ENCODE measurements at regions of chr12 and their contacts with region 1.

Region 1: DNA sequence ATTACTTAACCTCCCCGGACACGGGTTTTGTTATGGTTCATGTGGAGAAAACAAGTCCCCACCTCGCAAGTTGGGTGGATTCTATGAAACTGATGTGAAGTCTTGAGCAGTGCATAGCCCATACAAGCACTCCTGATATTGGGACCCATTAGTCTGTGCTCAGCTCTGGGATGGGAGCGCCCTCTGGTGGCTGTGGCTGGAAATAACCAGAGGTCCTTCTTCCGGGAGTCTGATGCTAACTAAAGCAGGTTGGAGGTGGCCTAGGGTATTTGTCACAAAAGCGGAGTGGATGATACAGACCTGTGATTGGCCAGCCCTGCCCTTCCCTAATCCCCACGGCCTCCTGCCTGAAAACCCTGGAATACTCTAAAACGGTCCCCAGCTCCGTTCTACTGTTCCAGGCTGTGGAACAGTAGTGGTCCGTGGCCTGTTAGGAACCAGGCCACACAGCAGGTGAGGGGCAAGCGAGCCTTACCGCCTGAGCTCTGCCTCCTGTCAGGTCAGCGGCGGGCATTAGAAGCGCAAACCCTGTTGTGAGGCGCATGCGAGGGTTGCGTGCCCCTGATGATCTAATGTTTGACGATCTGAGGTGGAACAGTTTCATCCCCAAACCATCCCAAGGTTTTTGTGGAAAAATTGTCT is 6.4 kb downstream of the SLC48A1 start:
- DNase-seq: peak; percentile 63 to 96
- H3K4me3 ChIP-seq: no peak overlapping the region
- H3K27ac ChIP-seq: peak overlapping the region; percentile 53 to 88
- H3K4me1 ChIP-seq: peaks cover 37 to 51% of the 10 kb centered on the region in 2 donors
- H3K27me3 ChIP-seq: no peaks in the 10 kb centered on the region
- CTCF ChIP-seq: peak; percentile 87 to 95 (median 92)

Region 2: DNA sequence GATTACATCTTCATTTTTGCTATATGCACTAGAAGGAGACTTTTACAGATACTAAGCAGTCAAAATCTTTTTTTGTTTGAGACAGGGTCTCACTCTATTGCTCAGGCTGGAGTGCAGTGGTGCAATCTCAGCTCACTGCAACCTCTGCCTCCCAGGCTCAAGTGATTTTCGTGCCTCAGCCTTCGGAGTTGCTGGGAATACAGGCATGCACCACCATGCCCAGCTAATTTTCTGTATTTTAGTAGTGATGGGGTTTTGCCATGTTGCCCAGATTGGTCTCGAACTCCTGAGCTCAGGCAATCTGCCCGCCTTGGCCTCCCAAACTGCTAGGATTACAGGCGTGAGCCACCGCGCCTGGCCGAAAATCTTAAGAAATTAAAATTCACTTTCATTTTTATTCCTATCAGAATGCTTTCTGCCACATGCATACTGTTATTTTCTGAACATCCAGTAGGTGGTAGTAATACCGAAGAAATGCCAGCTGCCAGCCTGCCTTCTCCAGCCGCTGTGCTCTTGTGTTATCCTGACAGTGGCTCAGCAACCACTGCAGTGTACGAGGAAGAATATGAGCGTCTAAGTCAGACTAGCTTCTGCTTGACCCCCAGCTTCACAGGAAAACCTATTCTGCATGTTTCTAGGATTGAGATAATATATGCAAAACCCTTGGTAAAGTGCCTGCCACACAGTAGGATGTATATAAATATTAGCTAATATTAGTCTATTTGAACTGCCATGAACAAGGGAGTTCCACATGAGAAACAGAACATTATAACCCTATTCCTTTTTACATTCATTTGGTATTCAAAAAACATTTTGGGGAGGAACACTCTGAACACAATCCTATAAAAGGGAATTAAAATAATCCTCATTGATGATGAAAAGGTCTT is 127.8 kb before region 1 on chr12:
- intact Hi-C with region 1: loop called (anchors 2 kb)
- DNase-seq: peak in 1 of 2 donors; percentile 72
- H3K4me3 ChIP-seq: peak overlapping the region in 1 of 2 donors; percentile 48
- H3K27ac ChIP-seq: peak overlapping the region; percentile 6 to 29
- H3K4me1 ChIP-seq: peaks cover 0 to 2% of the 10 kb centered on the region in 2 donors
- H3K27me3 ChIP-seq: no peaks in the 10 kb centered on the region
- CTCF ChIP-seq: peak; percentile 66 to 86 (median 74)

Region 3: DNA sequence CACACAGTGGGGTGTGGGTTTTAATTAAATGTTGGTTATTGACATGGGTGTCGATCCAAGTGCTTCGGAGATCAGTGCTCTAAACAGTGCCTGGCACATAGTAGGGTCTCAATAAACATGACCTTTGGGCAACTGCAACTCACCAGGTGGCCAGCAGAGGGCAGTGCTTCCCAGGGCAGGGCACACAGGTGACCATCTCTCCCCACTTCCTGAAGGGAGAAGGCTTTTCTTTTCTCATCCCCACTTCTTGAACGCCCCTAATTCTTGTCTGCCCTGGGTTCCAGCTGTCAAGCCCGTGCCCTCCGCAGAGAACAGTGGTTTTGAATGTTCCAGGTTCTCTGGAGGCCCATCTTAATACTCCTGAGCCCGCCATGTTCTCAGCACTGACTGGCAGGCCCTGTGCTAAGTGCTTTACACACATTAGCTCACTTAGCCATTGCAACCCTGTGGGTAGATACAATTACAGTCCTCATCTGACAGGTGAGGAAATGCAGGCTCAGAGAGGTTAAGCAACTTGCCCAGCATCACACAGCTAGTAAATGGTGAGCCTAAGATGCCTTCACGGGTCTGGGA is 37.1 kb before region 1 on chr12:
- intact Hi-C with region 1: loop called (anchors 1 kb)
- DNase-seq: peak in 1 of 2 donors; percentile 83
- H3K4me3 ChIP-seq: no peak overlapping the region
- H3K27ac ChIP-seq: no peak overlapping the region
- H3K4me1 ChIP-seq: peaks cover 0 to 20% of the 10 kb centered on the region in 2 donors
- H3K27me3 ChIP-seq: no peaks in the 10 kb centered on the region
- CTCF ChIP-seq: peak; percentile 92 to 96 (median 93)

Region 4: GRCh38 chr12:47954058-47954457 is 174.6 kb after region 1 on chr12:
- intact Hi-C with region 1: no loop called
- DNase-seq: no peak
- H3K4me3 ChIP-seq: no peak overlapping the region
- H3K27ac ChIP-seq: no peak overlapping the region
- H3K4me1 ChIP-seq: no peaks in the 10 kb centered on the region
- H3K27me3 ChIP-seq: no peaks in the 10 kb centered on the region
- CTCF ChIP-seq: no peak

Measured in ascending aorta (tissue), 2 donors.